Sciatic nerve (tissue), 2 donors: ENCODE measurements at regions of chr9 and their contacts with region 1.

Region 1: DNA sequence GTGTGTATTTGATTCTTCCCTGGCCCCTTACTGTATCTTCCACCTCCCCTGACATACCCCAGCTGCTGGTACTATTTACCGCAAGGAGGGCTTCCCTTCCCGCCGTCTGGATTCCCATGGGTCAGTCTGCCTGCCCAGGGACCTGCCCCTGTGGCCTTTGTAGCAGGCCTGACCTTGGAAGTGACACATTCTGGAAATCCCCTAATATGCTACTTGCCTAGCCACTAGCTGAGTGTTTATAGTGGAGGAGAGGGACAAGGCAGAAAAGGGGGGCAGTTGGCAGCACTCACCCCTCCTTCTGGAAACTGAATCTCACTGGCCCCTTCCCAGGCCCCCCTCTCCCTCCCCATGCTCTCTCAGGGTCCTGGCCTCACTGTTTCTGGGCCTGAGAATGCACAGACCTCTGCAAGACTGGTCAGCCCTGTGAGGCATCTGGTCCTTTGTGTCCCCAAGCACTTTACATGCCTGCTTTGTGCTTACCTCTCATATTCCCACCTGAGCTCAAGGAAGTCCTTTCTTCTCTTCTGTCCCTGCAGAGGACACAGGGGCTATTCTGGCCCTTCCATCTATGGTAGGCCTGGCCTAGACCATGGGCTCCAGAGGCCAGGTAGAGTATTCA is 8.2 kb upstream of the CCL21 start:
- DNase-seq: no peak
- ATAC-seq: no peak

Region 2: GRCh38 chr9:34282096-34282495 is 436.0 kb before region 1 on chr9:
- intact Hi-C with region 1: loop called (anchors 5 kb)
- DNase-seq: no peak
- ATAC-seq: no peak

Region 3: DNA sequence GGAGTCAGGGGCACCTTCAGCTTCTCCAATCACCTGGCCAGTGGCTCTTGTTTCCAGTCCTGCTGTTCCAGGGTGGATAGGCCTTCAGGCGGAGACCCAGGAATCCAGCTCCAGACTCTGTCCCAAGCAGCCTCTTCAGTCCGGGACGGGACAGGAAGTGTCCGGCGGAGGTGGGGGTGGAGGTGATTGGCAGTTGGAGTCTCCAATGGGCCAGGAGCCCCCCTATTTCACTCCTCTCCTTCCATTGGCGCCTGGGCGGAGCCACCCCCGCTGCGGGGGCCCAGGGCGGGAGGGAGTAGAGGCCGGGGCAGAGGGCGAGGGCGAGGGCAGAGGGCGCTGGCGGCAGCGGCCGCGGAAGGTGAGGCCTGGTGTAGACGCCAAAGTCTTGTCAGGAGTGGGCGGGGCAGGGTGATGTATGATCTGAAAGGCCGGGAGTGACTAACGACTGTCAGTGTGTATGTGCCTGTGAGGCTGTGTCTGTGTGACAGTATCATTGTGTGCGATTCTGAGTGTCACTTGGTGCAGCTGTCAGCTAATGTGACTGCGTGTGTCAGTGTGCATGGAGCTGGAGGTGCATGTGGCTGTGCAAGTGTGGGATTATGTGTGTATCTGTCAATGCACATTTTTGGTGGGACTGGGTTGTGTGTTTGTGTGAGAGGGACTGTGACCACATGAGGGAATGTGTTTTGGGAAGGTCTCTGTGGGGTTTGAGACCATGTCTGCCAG is 66.1 kb before region 1 on chr9 and contains the start of gene IL11RA:
- intact Hi-C with region 1: no loop called
- DNase-seq: peak; percentile 91
- ATAC-seq: peak; percentile 88
- total RNA-seq, gene IL11RA: 31.3 TPM

Region 4: DNA sequence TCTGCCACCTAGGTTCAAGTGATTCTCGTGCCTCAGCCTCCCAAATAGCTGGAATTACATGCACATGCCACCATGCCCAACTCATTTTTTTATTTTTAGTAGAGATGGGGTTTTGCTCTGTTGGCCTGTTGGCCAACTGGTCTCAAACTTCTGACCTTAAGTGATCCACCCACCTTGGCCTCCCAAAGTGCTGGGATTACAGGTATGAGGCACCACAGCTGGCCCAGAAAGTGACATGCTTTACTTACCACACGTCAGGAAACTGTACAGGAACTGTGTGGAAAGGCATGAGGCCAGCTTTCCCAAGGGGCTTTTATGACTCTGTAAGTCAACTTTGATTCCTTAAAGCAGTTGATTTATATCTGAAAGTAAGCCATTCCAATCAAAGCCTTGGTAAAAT is 296.4 kb after region 1 on chr9:
- intact Hi-C with region 1: no loop called
- DNase-seq: no peak
- ATAC-seq: no peak